ENCODE measurements at regions of chr7 and their contacts with region 1.

Region 1: DNA sequence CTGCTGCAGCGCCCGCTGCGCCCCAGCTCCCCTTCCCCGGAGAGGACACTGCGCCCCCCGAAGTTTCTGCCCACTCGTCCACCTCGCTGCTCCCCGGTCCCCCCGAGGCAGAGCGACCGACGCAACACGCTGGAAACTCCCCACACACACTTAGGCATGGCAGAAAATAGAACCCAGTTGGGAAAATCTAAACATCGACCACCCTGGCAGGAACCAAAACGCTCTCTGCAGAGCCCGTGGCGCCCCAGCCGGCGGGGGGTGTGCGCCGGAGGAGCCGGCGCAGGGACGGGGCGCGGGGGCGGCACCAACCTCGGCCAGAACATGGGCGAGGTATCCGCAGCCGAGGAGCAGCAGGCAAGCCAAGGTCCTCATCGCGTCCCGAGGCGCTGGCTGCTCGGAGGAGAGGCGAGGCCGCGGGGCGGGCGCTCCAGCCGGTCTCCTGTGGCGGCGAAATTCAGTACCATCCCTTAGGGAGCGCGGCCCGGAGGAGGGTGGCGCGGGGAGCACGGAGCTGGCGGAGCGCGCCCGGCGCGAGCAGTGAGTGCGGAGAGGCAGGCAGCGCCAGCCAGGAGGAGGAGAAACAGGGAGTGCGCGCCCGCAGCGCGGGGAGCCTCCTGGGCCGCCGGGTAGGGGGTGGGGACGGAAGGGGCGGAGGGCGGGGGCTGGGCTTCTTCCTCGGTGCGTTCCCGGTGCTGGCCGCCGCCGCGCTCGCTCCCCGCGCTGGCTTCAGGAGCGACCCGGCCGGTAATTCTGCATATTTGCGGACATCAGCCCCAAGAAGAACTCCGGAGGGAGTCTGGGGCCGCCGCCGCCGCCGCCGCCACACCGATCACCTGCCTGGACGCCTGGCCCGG is 789 bp downstream of the PDGFA start:
- DNase-seq: peak; percentile 84 to 86
- ATAC-seq: peak; percentile 50 to 66 (median 59)
- H3K4me3 ChIP-seq: peak overlapping the region; percentile 56 to 95 (median 75)
- H3K27ac ChIP-seq: peak overlapping the region; percentile 83 to 95 (median 90)
- H3K4me1 ChIP-seq: peaks cover 30 to 74% (median 61%) of the 10 kb centered on the region in 9 donors
- H3K27me3 ChIP-seq: peaks cover 0 to 80% (median 26%) of the 10 kb centered on the region in 7 donors
- CTCF ChIP-seq: peak in 2 of 9 donors; percentile 15 to 17

Region 2: DNA sequence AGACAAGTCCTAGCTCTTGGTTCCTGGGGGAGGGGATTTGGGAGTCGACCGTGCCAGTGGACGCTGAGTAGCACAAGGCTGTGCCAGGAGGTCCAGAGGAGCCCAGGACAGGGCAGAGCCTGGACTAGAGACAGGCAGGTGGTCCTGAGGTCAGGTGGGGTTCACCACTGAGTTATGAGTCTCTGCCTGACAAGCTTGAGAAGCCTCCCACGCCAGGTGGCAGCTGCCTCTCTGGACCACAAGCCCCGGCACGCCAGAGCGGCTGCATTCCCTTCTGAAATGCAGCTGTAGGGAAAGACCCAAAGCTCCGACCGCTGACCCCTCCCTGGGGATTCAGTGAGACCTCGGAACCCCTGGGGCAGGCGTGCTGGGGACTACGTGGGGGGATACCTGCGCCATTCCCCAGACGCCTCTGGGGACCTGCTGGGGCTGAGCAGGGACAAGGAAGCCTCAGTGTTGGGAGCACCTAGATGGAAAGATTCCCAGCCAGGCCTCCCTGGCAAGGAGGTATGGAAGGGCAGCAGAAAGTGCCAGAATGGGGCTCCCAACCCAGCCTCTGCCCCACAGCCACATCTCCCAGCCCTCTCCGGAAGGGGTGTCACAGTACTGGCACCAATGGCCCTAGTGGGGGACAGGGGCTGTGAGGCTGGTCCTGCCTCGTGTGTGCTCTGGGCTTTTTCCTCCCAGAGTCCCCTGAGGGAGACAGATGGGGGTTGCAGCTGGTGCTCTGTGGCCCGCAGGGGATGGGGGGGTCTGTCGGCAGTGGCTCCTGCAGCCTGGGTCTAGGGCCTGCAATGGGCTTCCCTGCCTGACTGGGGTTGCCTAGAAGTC is 28.2 kb before region 1 on chr7:
- intact Hi-C with region 1: no loop called
- DNase-seq: peak in 1 of 2 donors; percentile 7
- ATAC-seq: no peak
- H3K4me3 ChIP-seq: no peak overlapping the region
- H3K27ac ChIP-seq: no peak overlapping the region
- H3K4me1 ChIP-seq: peaks cover 0 to 19% (median 0%) of the 10 kb centered on the region in 9 donors
- H3K27me3 ChIP-seq: peaks cover 0 to 5% (median 0%) of the 10 kb centered on the region in 7 donors
- CTCF ChIP-seq: no peak

Region 3: GRCh38 chr7:636396-636795 is 117.5 kb after region 1 on chr7:
- intact Hi-C with region 1: loop called in 3 of 10 experiments (anchors 5 to 10 kb)
- DNase-seq: peak in 1 of 2 donors; percentile 26
- ATAC-seq: peak in 5 of 8 donors; percentile 53 to 70 (median 59)
- H3K4me3 ChIP-seq: no peak overlapping the region
- H3K27ac ChIP-seq: no peak overlapping the region
- H3K4me1 ChIP-seq: no peaks in the 10 kb centered on the region
- H3K27me3 ChIP-seq: no peaks in the 10 kb centered on the region
- CTCF ChIP-seq: peak in 8 of 9 donors; percentile 20 to 60 (median 51)

Region 4: GRCh38 chr7:668139-668931 is 149.5 kb after region 1 on chr7:
- intact Hi-C with region 1: loop called in 1 of 10 experiments (anchors 5 kb)
- DNase-seq: peak in 1 of 2 donors; percentile 48
- ATAC-seq: peak in 7 of 8 donors; percentile 16 to 57 (median 37)
- H3K4me3 ChIP-seq: peak overlapping the region in 4 of 10 donors; percentile 5 to 15 (median 9)
- H3K27ac ChIP-seq: peak overlapping the region in 9 of 10 donors; percentile 45 to 84 (median 66)
- H3K4me1 ChIP-seq: peaks cover 20 to 51% (median 45%) of the 10 kb centered on the region in 9 donors
- H3K27me3 ChIP-seq: no peaks in the 10 kb centered on the region
- CTCF ChIP-seq: peak in 1 of 9 donors; percentile 6

Region 5: GRCh38 chr7:732094-732541 is 213.3 kb after region 1 on chr7:
- intact Hi-C with region 1: loop called in 7 of 10 experiments (anchors 5 to 10 kb)
- DNase-seq: peak; percentile 58 to 66
- ATAC-seq: peak; percentile 65 to 89 (median 82)
- H3K4me3 ChIP-seq: no peak overlapping the region
- H3K27ac ChIP-seq: peak overlapping the region; percentile 33 to 94 (median 88)
- H3K4me1 ChIP-seq: peaks cover 6 to 39% (median 26%) of the 10 kb centered on the region in 9 donors
- H3K27me3 ChIP-seq: no peaks in the 10 kb centered on the region
- CTCF ChIP-seq: peak in 8 of 9 donors; percentile 13 to 73 (median 48)

Measured in heart right ventricle (tissue), 16 donors.